HAP-1 (cell line): ENCODE measurements at regions of chr9 and their contacts with region 1.

Region 1: GRCh38 chr9:85508616-85509015 is 233.1 kb downstream of the AGTPBP1 start:
- DNase-seq: no peak
- H3K4me3 ChIP-seq: no peak overlapping the region
- H3K4me1 ChIP-seq: no peaks in the 10 kb centered on the region
- H3K27me3 ChIP-seq: no peaks in the 10 kb centered on the region

Region 2: DNA sequence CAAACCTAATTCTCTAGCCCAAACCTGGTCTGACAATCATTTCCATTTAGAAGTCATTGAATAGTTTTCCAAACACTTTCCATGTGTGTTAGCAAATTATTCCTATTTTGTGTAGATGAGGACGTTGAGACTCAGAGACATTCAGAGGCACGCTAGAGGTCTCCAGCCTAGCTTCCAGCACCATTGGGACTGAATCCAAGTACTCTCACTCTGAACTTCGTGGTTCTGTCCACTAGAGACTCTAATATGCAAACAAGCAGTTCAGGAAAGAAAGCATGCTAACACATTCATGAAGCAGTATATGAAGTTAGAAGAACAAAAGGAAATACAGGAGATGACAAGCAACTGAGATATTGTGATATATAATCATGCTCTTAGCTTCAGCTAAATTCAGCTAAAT is 484.2 kb before region 1 on chr9:
- in situ Hi-C with region 1: no loop called
- DNase-seq: no peak
- H3K4me3 ChIP-seq: no peak overlapping the region
- H3K4me1 ChIP-seq: no peaks in the 10 kb centered on the region
- H3K27me3 ChIP-seq: no peaks in the 10 kb centered on the region

Region 3: DNA sequence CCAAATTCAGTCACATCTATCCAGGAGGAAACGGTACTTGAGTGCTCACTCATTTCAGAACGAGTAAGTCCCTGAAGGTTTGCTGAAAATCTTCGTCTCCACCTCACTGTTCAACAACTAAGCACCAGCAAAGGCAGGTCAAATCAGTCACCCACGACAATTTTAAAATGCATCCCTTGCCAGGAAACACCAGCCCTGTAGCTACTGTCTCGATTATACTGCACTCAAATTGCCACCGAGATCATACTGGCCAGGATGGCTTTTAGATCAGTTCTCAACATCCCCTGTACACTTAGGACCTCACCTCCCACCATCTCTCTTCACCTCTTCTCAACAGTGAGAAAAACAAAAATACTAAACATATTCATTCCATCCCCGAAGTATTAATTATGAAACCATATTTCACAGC is 65.4 kb before region 1 on chr9:
- in situ Hi-C with region 1: loop called (anchors 10 kb)
- DNase-seq: no peak
- H3K4me3 ChIP-seq: no peak overlapping the region
- H3K4me1 ChIP-seq: no peaks in the 10 kb centered on the region
- H3K27me3 ChIP-seq: no peaks in the 10 kb centered on the region